ENCODE measurements at regions of chr2 and their contacts with region 1.

Region 1: GRCh38 chr2:38377050-38377828 is at the start of gene ATL2:
- DNase-seq: peak; percentile 97
- ATAC-seq: peak; percentile 79
- H3K4me3 Mint-ChIP-seq: peak within 1 kb of the TSS; percentile 90
- H3K27ac Mint-ChIP-seq: peak within 1 kb of the TSS; percentile 90
- H3K4me1 Mint-ChIP-seq: peaks cover 73% of the 10 kb centered on the region
- H3K27me3 Mint-ChIP-seq: no peaks in the 10 kb centered on the region
- total RNA-seq, gene ATL2: 29.9 to 50.3 TPM

Region 2: DNA sequence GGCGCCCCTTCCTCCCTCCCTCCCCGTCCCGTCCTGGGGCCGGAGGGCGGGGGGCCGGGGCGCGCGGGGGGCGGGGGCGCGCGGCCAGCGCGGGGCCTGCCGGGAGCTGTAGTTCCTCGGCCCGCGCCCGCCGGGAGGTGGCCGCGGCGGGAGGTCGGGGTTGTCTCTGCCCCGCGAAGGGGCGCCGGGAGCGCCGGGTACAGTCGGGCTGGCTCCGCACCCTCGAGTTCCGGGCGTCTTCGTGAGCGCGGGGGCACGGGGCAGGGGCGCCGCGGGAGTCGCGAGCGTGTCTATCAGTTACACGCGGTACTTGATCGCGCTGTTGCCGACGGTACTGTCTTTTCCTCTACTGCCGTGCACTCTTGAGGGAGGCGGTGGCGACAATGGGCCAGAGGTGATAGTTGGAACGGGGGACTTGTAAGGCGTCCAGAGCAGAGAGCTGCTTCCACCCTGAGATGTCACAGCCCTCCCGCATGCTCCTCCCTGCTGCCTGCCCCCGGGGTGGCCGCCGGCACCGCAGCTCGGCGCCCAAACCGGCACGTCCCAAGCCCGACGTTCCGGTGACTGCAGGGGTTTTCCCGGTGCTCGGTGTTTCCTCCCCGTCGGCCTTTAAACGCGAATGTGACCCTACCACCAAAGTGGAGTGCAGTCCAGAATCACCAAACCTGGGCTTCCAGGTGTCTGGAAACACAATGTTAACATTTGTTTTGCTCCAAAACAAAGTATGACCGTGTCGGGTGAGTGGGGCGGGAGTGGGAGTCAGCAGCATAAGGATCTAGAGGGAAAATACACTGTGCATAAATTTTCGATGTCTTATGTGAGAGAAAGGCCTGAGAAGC is 1052.2 kb before region 1 on chr2 and contains the start of gene PRKD3:
- CTCF ChIA-PET with region 1: no interaction called
- POLR2A ChIA-PET with region 1: no interaction called
- intact Hi-C with region 1: loop called in 1 of 2 experiments (anchors 2 kb)
- DNase-seq: peak; percentile 66
- ATAC-seq: peak; percentile 76
- H3K4me3 Mint-ChIP-seq: peak within 1 kb of the TSS; percentile 91
- H3K27ac Mint-ChIP-seq: peak within 1 kb of the TSS; percentile 92
- H3K4me1 Mint-ChIP-seq: peaks cover 27% of the 10 kb centered on the region
- H3K27me3 Mint-ChIP-seq: peaks cover 17% of the 10 kb centered on the region
- total RNA-seq, gene PRKD3: 17.4 to 22.8 TPM

Region 3: DNA sequence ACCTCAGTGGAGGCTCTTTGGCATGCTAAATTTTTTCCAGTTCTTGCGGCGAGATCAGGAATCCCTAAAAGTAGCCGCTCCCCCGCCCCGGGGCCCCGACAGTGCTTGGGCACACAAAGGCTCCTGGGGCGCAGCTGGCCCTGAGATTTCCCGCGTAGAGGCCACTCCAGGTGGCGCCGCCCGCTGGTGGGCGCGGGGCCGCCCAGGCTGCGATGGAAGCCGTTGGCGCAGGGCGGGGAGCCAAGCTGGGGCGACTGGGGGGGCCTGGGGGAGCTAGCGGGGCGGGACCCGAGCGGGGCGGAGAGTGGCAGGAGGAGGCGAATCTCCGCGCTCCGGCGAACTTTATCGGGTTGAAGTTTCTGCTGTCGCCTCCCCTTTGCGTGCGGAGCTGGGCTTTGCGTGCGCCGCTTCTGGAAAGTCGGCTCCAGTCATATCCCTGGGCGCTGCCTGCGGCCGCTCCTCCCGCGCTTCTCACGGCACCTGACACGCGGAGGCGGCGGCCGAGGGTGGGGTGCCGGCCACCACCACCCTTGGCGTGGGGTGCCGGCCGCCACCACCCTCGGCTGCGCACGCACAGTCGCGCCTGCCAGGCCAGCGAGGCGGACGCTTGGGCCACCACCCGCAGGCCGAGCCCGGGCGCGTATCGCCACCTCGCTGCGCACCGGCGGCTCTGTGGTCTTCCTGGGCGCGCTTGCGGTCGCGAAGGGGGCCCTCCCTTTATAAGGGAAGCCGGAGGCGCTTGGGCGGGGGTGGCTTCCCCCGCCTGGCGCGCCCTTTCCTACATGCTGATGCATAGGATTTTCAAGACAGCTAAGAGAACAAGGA is 300.4 kb before region 1 on chr2:
- CTCF ChIA-PET with region 1: no interaction called
- POLR2A ChIA-PET with region 1: no interaction called
- intact Hi-C with region 1: loop called in 1 of 2 experiments (anchors 2 kb)
- DNase-seq: peak; percentile 90
- ATAC-seq: peak; percentile 75
- H3K4me3 Mint-ChIP-seq: peak overlapping the region; percentile 71
- H3K27ac Mint-ChIP-seq: peak overlapping the region; percentile 88
- H3K4me1 Mint-ChIP-seq: peaks cover 24% of the 10 kb centered on the region
- H3K27me3 Mint-ChIP-seq: peaks cover 64% of the 10 kb centered on the region

Region 4: DNA sequence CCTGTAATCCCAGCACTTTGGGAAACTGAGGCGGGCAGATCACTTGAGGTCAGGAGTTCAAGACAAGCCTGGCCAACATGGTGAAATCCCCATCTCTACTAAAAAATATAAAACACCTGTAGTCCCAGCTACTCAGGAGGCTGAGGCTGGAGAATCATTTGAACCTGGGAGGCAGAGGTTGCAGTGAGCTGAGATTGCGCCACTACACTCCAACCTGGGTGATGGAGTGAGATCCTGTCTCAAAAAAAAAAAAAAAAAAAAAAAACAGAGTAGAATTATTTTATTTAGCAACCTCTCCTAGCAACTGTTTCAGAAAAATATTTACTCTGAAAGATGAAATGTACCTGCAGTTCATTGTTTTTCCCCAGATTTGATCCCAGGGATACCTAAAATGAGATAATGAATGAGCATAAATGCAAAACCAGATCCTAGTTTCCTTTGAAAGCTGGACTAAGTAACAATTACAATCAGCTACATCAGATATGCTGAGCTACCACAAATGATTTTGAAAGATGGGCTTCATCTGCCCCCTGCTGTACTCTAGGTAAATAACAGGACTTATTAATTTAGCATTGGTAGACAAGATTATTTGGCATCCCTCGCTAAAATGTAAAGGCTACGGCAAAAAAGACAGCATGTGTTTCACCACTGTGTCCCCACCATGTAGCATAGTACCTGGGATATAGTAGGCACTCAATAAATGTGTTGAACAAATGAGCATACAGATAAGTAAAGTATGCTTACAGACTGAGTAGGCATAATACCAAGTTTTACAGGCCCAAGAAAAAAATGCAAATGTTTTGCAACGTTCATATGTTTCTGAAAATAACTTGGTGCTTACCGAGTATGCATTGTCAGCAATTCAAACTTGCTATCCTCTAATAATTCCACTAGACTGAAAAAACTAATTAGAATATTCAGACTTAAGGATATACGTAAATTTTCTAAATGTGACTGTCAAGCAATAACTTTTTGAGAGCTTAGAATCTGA is 102.7 kb before region 1 on chr2:
- CTCF ChIA-PET with region 1: no interaction called
- POLR2A ChIA-PET with region 1: no interaction called
- intact Hi-C with region 1: no loop called
- DNase-seq: peak; percentile 42
- ATAC-seq: no peak
- H3K4me3 Mint-ChIP-seq: no peak overlapping the region
- H3K27ac Mint-ChIP-seq: no peak overlapping the region
- H3K4me1 Mint-ChIP-seq: peaks cover 3% of the 10 kb centered on the region
- H3K27me3 Mint-ChIP-seq: no peaks in the 10 kb centered on the region

Region 5: GRCh38 chr2:38462109-38462759 is 85.0 kb after region 1 on chr2:
- CTCF ChIA-PET with region 1: interaction called, 5 read pairs
- POLR2A ChIA-PET with region 1: interaction called, 8 read pairs
- intact Hi-C with region 1: loop called (anchors 1 to 5 kb)
- DNase-seq: peak; percentile 81
- ATAC-seq: peak; percentile 98
- H3K4me3 Mint-ChIP-seq: peak overlapping the region; percentile 11
- H3K27ac Mint-ChIP-seq: peak overlapping the region; percentile 49
- H3K4me1 Mint-ChIP-seq: peaks cover 10% of the 10 kb centered on the region
- H3K27me3 Mint-ChIP-seq: peaks cover 18% of the 10 kb centered on the region

Region 6: DNA sequence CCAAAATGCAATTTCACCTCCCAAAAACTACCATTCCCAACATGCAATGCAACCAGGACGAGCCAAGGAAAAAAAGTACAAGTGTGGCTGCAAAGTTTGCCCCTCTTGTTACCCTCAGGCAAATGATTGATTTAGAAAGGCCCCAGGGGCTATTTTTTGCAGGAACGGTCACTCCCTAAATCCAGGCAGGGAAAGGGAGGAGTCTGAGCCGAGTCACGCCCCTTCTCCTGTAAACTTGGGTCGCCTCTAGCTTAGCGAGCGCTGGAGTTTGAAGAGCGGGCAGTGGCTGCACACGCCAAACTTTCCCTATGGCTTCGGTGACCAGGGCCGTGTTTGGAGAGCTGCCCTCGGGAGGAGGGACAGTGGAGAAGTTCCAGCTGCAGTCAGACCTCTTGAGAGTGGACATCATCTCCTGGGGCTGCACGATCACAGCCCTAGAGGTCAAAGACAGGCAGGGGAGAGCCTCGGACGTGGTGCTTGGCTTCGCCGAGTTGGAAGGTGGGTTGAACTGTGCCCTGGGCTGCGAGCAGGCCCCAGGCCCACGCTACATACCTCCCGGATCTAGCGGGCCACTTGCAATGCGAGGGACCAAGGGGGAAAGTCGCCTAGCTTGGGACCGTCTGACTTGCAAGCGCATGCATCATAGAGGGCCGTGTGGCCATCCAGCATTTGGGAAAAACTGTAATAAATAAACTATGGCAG is 288.8 kb after region 1 on chr2 and contains the start of gene GALM:
- CTCF ChIA-PET with region 1: no interaction called
- POLR2A ChIA-PET with region 1: no interaction called
- intact Hi-C with region 1: loop called in 1 of 2 experiments (anchors 2 kb)
- DNase-seq: peak; percentile 77
- ATAC-seq: peak; percentile 32
- H3K4me3 Mint-ChIP-seq: peak within 1 kb of the TSS; percentile 89
- H3K27ac Mint-ChIP-seq: peak within 1 kb of the TSS; percentile 99
- H3K4me1 Mint-ChIP-seq: peaks cover 67% of the 10 kb centered on the region
- H3K27me3 Mint-ChIP-seq: no peaks in the 10 kb centered on the region
- total RNA-seq, gene GALM: 56.0 to 57.8 TPM

Region 7: DNA sequence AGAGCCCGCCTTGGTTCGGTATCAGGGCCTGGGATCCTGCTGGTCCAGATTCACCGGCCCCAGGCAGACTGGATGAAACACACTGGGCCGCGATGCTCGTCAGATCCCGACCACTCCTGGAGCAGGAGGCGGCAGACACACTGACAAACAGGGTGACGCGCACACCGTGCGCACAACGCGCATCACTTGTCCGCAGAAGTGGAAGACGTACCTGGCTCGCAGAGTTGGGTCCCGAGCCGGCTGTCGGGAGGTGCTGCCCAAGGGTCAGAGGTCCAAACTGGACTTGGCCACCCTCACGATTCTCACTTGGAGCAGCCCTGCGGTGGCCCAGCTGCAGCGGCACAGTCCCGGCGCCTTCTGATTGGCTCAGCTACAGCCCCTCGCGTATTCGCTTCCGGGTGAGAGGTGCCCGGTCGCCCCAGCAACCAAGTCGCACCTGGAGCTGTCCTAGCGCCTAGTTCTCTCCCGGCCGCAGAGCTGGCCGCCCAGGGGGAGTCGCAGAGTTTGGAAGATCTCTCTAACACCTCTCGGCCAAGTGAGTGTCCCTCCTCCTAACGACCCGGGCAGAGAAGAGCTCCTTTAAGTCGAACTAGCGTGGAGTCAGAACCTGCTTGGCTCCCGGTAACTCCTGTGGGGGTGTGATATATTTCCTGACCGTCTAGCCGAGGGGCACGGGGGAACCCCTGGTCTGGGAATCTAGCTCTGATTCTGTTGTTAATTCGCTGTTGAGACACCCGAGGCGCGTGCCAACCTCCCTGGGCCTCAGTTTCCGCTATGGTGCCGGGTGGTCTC is 498.5 kb after region 1 on chr2 and contains the starts of genes DHX57 and MORN2:
- CTCF ChIA-PET with region 1: no interaction called
- POLR2A ChIA-PET with region 1: no interaction called
- intact Hi-C with region 1: loop called in 1 of 2 experiments (anchors 2 kb)
- DNase-seq: peak; percentile 91
- ATAC-seq: peak; percentile 99
- H3K4me3 Mint-ChIP-seq: peak within 1 kb of the TSS; percentile 98
- H3K27ac Mint-ChIP-seq: peak within 1 kb of the TSS; percentile 90
- H3K4me1 Mint-ChIP-seq: peaks cover 18% of the 10 kb centered on the region
- H3K27me3 Mint-ChIP-seq: no peaks in the 10 kb centered on the region
- total RNA-seq, gene DHX57: 14.0 to 20.3 TPM
- total RNA-seq, gene MORN2: 6.6 to 7.9 TPM

Measured in activated CD4-positive, alpha-beta T cell treated with anti-CD3 and anti-CD28 coated beads for 36 hours (primary cell).